ENCODE measurements at regions of chr7 and their contacts with region 1.

Region 1: DNA sequence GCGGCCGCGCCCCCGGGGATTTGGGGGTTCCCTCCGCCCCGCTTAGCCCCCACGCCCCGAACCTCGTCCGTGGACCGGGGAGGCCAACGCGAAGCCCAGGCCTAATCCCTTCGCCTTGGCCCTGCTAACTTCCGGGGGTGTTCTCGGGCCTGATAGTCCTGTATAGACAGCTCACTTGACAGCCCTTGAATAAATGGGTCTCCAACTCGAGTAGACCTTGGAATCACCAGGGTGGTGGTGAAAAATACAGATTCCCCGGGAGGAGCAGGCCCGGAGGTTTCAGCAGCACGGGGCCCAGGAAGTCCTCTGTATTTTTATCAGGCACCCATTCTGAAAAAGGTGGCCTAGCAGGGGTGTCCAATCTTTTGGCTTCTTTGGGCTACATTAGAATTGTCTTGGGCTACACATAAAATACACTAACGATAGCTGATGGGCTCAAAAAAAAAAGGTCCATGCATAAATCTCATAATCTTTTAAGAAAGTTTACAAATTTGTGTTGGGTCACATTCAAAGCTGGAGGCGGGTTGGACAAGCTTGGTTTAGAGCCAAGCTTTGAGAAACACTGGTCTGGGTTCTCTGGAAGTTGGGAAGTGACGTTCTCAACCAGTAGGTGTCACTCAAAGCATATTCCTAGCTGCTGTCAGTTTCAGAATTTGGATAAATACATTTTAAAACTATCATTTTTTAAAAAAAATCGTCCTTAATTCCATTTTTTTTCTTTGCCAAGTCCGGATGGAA is 221.7 kb downstream of the PHTF2 start:
- DNase-seq: peak in 5 of 10 donors; percentile 41 to 70 (median 53)
- H3K4me3 ChIP-seq: peak overlapping the region; percentile 37 to 74 (median 59)
- H3K27ac ChIP-seq: peak overlapping the region; percentile 61 to 96 (median 89)
- H3K27me3 ChIP-seq: no peaks in the 10 kb centered on the region
- CTCF ChIP-seq: peak; percentile 48 to 90 (median 84)

Region 2: DNA sequence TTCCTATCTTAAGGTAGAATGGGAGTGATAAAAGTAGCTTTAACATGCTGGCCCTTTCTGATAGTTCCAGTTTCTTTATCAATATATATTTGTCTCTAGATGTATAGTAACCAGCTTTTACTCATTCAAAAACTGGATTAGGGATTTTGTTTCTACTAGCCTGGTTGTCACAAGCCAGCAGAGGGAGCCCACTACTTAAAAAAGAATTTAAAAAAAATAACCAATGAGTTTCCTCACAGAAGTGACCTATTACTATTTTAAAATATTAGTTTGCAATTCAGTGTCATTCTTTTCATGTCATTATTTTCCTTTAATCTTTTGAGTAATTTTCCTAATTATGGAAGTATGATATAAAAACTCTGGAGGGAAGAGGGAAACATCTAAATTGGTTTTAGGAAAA is 79.7 kb before region 1 on chr7:
- intact Hi-C with region 1: loop called in 1 of 2 experiments (anchors 10 kb)
- DNase-seq: peak in 2 of 10 donors; percentile 39 to 49
- H3K4me3 ChIP-seq: no peak overlapping the region
- H3K27ac ChIP-seq: no peak overlapping the region
- H3K27me3 ChIP-seq: no peaks in the 10 kb centered on the region
- CTCF ChIP-seq: peak; percentile 31 to 85 (median 68)

Region 3: DNA sequence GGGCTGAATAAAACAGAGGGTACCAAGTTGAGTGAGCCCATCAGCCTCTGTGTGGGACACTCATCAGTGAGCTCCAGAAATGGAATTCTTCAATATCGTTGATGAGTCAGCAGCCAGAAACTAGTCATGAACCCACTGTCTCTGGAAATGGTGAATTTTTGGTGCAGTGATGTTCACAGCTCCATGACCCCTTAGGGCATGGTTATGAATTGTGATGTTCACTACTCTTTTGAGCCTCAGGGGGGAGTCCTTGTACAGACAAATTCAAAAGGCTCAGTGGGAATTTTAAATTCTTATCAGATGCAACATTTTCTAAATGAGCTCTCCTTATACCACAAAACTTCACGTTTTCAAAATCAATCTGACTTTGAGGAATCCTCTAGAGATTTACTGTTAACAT is 114.0 kb after region 1 on chr7:
- intact Hi-C with region 1: loop called (anchors 10 kb)
- DNase-seq: no peak
- H3K4me3 ChIP-seq: no peak overlapping the region
- H3K27ac ChIP-seq: peak overlapping the region in 1 of 59 donors; percentile 18
- H3K27me3 ChIP-seq: no peaks in the 10 kb centered on the region
- CTCF ChIP-seq: peak; percentile 14 to 72 (median 58)

Region 4: GRCh38 chr7:79176859-79177477 is 1156.7 kb after region 1 on chr7:
- intact Hi-C with region 1: loop called in 1 of 2 experiments (anchors 5 kb)
- DNase-seq: peak in 2 of 10 donors; percentile 13 to 21
- H3K4me3 ChIP-seq: peak overlapping the region in 17 of 59 donors; percentile 3 to 39 (median 13)
- H3K27ac ChIP-seq: no peak overlapping the region
- H3K27me3 ChIP-seq: no peaks in the 10 kb centered on the region
- CTCF ChIP-seq: peak in 55 of 56 donors; percentile 40 to 88 (median 71)

Measured in dorsolateral prefrontal cortex (tissue), 120 donors.